Uterus (tissue), 4 donors: ENCODE measurements at regions of chr3 and their contacts with region 1.

Region 1: DNA sequence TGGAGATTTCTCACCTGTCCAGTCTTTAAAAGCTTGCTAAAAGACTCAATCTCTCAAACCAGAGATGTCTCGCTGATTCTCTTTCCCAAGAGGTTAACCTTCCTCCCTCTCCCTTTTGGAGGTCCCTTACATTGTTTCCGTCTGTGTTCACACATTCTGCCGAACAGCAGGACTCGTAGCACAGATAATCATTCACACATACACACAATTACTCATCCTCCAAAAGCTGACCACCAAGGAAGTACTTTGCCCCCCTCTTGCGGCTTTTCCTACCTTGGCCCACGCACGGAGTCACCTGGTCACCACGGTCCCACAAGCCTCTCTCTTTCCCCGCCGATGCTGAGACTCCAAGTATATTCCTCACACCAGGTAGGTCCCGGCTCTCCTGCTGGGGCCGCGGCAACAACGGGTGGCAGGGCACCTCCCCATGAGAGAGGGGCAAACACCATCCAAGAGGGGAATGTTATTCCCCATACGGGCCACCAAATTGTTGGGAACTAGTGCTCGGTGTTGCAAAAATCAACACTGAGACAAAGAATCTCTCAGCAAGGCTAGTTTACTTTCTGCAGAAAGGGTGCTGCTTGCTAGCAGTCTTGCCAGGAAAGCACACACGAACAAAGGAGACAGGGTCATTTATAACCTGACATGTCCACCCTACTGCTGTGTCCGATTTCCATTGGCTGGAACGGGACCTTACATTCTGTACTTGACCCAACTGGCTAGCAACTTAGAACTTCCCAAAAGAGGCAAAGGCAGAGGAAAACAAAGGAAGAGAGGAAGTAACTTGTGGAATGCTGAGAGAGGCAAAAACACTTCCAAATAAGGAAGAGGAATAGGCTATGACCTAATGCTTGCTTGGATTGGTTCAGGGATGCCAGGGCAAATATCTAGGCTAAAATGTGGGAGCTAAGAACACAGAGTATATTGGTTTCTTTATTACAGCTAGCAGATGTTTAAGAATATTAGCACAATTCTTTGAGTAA is 102.1 kb upstream of the NECTIN3 start:
- DNase-seq: no peak
- H3K4me3 ChIP-seq: no peak overlapping the region
- H3K27ac ChIP-seq: no peak overlapping the region
- H3K4me1 ChIP-seq: no peaks in the 10 kb centered on the region
- H3K27me3 ChIP-seq: no peaks in the 10 kb centered on the region
- CTCF ChIP-seq: no peak
- POLR2A ChIP-seq: no peak

Region 2: DNA sequence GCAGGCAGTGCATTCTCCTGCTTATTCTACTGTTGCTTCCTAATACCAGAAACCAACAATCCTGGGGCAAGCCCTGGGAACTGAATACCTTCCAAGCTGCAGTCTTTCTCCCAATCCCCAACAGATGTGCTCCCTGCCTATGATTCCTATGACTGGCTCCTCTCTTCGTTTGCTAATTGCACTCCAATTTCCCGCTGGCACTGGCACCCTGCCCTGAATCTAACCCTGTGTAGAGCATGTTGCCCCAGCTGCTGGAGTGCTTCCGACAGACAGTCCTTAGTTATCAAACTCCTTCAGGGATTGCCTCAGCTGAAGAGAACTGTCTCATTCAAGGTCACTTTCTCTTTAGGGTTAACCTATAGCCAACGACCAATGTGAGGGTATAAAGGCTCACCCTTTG is 316.2 kb after region 1 on chr3:
- intact Hi-C with region 1: no loop called
- DNase-seq: no peak
- H3K4me3 ChIP-seq: no peak overlapping the region
- H3K27ac ChIP-seq: no peak overlapping the region
- H3K4me1 ChIP-seq: no peaks in the 10 kb centered on the region
- H3K27me3 ChIP-seq: no peaks in the 10 kb centered on the region
- CTCF ChIP-seq: no peak
- POLR2A ChIP-seq: no peak

Region 3: DNA sequence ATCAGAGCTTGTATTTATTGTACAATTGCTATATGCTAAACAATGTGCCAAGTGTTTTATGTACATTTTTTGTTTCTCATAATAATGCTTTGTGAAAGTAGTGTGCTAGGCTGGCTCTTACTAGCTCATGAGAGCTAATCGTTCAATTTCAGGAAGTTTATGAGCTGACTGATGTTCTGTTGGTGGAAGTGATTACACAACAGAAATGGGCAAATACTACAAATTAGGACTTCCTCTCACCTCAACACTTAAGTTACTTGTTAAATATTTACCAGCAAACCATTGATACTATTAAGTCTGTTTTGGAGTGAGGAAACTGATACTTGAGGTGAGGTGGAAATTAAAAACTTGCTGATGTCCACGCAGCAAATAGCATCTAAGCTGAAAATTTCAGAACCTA is 1292.2 kb after region 1 on chr3:
- intact Hi-C with region 1: loop called (anchors 10 kb)
- DNase-seq: no peak
- H3K4me3 ChIP-seq: no peak overlapping the region
- H3K27ac ChIP-seq: no peak overlapping the region
- H3K4me1 ChIP-seq: no peaks in the 10 kb centered on the region
- H3K27me3 ChIP-seq: no peaks in the 10 kb centered on the region
- CTCF ChIP-seq: no peak
- POLR2A ChIP-seq: no peak